ENCODE measurements at regions of chr12 and their contacts with region 1.

Region 1: DNA sequence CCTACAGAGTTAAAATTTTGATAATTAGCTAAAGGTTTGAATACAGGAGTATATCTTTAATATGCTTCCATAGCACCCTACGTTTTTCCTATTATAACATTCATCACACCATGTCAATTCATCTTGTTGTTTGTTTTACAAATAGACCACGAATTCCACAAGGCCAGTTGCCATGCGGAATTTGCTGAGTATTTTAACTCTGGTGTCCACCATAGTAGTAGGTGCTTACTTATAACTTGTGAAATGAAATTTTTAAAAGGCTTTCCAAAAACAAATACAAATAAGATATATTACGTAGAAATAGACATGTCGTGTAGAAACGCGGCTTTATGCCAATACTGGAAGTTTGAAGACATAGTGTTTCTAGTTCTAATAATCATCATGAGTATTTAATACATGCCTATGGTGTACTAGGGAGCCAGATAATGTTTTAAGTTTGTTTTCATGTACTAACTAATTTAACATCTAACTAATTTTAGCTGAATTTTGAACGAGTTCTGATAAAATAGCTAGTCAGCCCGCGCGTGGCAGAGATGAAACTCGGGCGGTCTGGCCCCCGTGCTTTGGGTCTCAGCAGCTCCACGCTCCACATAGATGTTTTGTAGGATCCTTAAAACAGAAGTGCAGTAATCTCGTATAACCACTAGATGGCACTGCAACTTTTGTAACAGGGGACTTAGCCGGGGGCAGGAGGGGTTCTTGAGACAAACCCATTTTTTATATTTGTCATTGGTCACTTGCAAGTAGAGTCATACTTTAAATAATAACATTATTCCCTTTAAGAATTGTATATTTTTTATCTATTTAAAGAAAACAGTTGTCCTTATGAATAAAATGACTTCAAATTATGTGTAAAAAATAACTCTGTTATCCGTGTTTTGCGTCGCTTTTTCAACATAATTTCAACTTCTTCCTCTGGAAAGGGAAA is 10.2 kb downstream of the CD69 start:
- DNase-seq: no peak
- H3K4me3 ChIP-seq: peak overlapping the region in 1 of 4 experiments; percentile 47; a peak in 2 of 8 replicates
- H3K27ac ChIP-seq: no peak overlapping the region
- H3K4me1 ChIP-seq: peaks cover 0 to 4% (median 0%) of the 10 kb centered on the region in 4 experiments; a peak in 1 of 7 replicates
- H3K27me3 ChIP-seq: no peaks in the 10 kb centered on the region
- CTCF ChIP-seq: peak in 2 of 3 experiments; percentile 64 to 88; a peak in 3 of 4 replicates
- EP300 ChIP-seq: no peak
- POLR2A ChIP-seq: no peak
- RAD21 ChIP-seq: peak; percentile 90 to 93

Region 2: GRCh38 chr12:9732921-9733461 is 17.5 kb before region 1 on chr12 and contains the start of gene CLECL1:
- CTCF ChIA-PET with region 1: interaction called, 14 read pairs
- POLR2A ChIA-PET with region 1: no interaction called
- DNase-seq: no peak
- H3K4me3 ChIP-seq: no peak within 1 kb of the TSS
- H3K27ac ChIP-seq: no peak within 1 kb of the TSS
- H3K4me1 ChIP-seq: no peaks in the 10 kb centered on the region
- H3K27me3 ChIP-seq: no peaks in the 10 kb centered on the region
- CTCF ChIP-seq: no peak
- EP300 ChIP-seq: no peak
- POLR2A ChIP-seq: no peak
- RAD21 ChIP-seq: no peak
- total RNA-seq, gene CLECL1: not detected in 2 replicates

Region 3: DNA sequence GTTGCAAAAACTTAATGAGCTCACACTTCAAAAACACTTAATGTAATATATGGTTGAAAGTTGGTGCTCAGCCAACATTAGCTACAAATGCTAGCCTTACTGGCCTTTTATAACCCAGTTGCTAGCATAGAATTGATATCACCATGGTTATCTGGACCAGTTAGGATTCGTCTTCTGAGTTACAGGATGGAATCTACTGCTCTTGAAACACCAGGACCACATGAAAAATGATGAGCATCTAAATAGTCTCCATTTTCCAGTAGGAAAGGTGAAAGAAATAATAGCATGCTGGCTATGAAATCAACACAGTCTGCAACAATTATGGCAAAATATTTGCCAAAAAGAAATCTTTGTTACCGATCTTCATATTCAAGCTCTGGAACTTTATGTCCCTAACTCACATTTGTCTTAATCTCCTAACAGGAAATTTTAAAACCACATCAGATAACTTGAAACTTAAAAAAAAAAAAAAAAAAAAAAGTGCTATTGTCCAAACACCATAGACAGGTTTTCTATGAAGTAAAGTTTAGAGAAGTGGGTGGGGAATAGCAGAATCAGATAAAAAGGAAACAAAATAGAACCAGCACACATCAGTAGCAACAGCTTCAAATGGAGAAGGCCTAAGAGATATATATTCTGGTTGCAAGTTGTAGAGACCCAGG is 22.8 kb after region 1 on chr12:
- CTCF ChIA-PET with region 1: interaction called, 30 read pairs
- POLR2A ChIA-PET with region 1: no interaction called
- DNase-seq: no peak
- H3K4me3 ChIP-seq: no peak overlapping the region
- H3K27ac ChIP-seq: no peak overlapping the region
- H3K4me1 ChIP-seq: peaks cover 0 to 5% (median 3%) of the 10 kb centered on the region in 4 experiments; a peak in 2 of 7 replicates
- H3K27me3 ChIP-seq: no peaks in the 10 kb centered on the region
- CTCF ChIP-seq: no peak
- EP300 ChIP-seq: no peak
- POLR2A ChIP-seq: no peak
- RAD21 ChIP-seq: no peak

Region 4: GRCh38 chr12:9797722-9798619 is 47.4 kb after region 1 on chr12:
- CTCF ChIA-PET with region 1: interaction called, 278 read pairs
- POLR2A ChIA-PET with region 1: no interaction called
- DNase-seq: peak in 1 of 2 experiments; percentile 43
- H3K4me3 ChIP-seq: no peak overlapping the region
- H3K27ac ChIP-seq: no peak overlapping the region
- H3K4me1 ChIP-seq: no peaks in the 10 kb centered on the region; a peak in 1 of 7 replicates
- H3K27me3 ChIP-seq: no peaks in the 10 kb centered on the region
- CTCF ChIP-seq: peak; percentile 53 to 95 (median 94)
- EP300 ChIP-seq: peak in 1 of 2 experiments; percentile 67; a peak in 1 of 3 replicates
- POLR2A ChIP-seq: no peak
- RAD21 ChIP-seq: peak; percentile 98 to 99

Region 5: GRCh38 chr12:9906873-9907272 is 156.3 kb after region 1 on chr12:
- CTCF ChIA-PET with region 1: interaction called, 26 read pairs
- POLR2A ChIA-PET with region 1: interaction called, 7 read pairs
- DNase-seq: no peak
- H3K4me3 ChIP-seq: peak overlapping the region in 1 of 4 experiments; percentile 71; a peak in 3 of 8 replicates
- H3K27ac ChIP-seq: no peak overlapping the region
- H3K4me1 ChIP-seq: peaks cover 0 to 9% (median 6%) of the 10 kb centered on the region in 4 experiments; a peak in 3 of 7 replicates
- H3K27me3 ChIP-seq: no peaks in the 10 kb centered on the region
- CTCF ChIP-seq: no peak
- EP300 ChIP-seq: no peak
- POLR2A ChIP-seq: peak in 1 of 2 experiments; percentile 37; a peak in 2 of 3 replicates
- RAD21 ChIP-seq: no peak